OCI-LY7 (cell line): ENCODE measurements at regions of chr17 and their contacts with region 1.

Region 1: DNA sequence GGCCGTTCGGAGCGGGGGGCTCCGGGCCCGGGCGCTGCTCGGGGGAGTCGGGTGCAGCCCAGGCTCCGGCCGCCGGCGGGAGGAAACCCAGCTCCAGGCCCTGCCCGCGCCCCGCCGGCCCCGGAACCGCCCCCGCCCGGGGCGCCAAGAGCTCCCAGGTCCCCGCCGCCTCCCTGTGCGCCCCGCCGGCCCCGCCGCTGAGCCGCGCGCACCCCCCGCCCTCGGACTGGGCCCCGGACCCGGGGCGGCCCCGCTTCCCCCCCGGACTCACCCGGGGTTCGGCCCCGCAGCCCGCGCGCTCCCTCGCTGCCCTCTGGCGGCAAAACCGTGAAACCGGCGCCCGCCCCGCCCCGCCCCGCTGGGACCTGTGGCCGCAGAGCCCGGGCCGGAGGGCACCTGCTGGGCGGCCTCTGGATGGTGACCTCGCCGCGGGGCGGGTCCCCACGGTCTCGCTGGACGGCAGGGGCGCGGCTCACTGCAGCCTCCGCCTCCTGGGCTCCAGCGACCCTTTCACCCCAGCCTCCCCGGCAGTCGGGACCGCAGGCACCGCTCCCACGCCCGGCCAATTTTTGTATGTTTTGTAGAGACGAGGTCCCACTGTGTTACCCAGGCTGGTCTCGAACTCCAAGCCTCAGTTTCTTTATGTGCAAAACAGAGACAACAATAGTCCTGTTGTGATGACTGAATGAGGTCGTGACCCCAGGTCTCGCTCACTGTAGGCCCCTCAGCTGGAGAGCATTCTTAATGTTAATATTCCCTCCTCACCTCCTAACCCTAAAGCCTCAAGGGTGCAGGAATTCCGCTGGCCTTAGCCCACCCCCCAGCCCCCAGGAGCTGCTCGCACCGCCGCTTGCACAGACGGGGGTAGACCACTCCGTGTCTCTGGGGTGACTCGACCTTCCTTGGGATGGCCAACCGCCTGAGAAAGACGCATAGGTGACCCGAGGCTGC is 33.6 kb upstream of the RPH3AL start:
- DNase-seq: peak; percentile 68
- H3K4me3 ChIP-seq: peak overlapping the region; percentile 66
- H3K27ac ChIP-seq: no peak overlapping the region
- H3K4me1 ChIP-seq: peaks cover 5% of the 10 kb centered on the region
- CTCF ChIP-seq: peak; percentile 68

Region 2: DNA sequence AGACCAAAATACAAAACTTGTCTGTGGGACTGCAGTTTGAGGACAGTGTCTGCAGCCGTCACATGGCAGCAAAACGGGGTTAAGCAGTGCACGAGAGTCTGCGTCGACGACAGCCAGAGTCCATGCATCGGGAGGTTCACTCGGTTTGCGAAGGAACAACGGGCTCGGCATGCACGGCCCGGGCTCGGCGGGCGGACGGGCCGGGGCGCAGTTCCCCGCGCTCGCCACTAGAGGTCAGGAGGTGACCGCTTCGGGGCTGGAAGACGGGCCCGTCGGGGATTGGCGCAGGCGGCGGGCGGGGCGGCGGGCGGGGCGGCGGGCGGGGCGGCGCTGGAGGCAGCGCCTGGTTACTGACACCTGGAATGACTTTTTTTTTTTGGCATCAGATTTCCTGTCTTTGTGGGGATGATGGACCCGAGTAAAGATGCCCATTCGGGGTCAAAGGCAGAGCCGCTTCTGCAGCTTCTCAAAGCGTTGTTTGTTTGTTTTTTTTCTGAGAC is 242.4 kb before region 1 on chr17:
- CTCF ChIA-PET with region 1: no interaction called
- POLR2A ChIA-PET with region 1: interaction called, 4 read pairs
- intact Hi-C with region 1: loop called (anchors 2 kb)
- DNase-seq: peak; percentile 69
- H3K4me3 ChIP-seq: no peak overlapping the region
- H3K27ac ChIP-seq: no peak overlapping the region
- H3K4me1 ChIP-seq: no peaks in the 10 kb centered on the region
- CTCF ChIP-seq: peak; percentile 83

Region 3: GRCh38 chr17:164303-165235 is 221.6 kb before region 1 on chr17:
- CTCF ChIA-PET with region 1: no interaction called
- POLR2A ChIA-PET with region 1: no interaction called
- intact Hi-C with region 1: loop called (anchors 2 kb)
- DNase-seq: peak; percentile 63
- H3K4me3 ChIP-seq: no peak overlapping the region
- H3K27ac ChIP-seq: no peak overlapping the region
- H3K4me1 ChIP-seq: no peaks in the 10 kb centered on the region
- CTCF ChIP-seq: peak; percentile 78

Region 4: DNA sequence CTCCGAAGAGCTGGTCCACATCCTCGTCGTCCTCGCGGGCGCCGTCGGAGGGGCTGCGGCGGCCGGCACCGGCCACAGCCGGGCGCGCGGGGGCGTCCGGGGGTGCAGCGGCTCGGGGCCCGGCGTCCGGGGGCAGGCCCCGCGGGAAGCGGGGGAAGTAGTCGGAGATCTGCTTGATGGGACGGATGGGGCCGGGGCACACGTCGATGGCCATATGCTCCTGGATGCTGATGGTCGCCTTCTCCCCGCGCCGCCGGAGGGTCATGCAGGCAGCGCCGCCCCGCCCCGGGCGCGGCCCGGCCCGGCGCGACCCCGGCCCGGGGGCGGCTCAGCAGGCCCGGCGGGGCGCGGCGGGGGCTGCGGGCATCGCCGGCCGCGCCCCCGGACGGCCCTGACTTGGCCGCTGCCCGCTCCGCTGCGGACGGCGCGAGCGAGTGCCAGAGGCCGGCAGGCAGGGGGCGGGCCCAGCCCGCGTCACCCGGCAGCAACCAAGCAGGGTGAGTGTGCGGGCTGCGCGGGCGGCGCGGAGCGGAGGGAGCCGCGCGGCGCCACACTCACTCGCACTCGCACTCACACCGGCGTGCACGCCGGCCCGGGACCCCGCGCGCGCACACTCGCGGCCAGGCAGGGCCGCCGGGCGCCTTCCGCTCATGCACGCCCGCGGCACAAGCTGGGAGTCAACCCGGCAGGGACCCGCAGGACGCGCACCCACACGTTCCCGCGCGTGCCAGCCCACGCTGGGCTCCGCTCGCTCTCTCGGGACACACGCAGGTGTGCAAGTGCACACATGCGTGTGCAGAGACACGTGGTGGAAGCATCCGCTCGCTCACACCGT is 204.8 kb before region 1 on chr17 and contains the start of gene DOC2B:
- CTCF ChIA-PET with region 1: no interaction called
- POLR2A ChIA-PET with region 1: no interaction called
- intact Hi-C with region 1: no loop called
- DNase-seq: no peak
- H3K4me3 ChIP-seq: no peak within 1 kb of the TSS
- H3K27ac ChIP-seq: no peak within 1 kb of the TSS
- H3K4me1 ChIP-seq: no peaks in the 10 kb centered on the region
- CTCF ChIP-seq: no peak
- total RNA-seq, gene DOC2B: not detected in 2 replicates